ENCODE measurements at regions of chr7 and their contacts with region 1.

Region 1: DNA sequence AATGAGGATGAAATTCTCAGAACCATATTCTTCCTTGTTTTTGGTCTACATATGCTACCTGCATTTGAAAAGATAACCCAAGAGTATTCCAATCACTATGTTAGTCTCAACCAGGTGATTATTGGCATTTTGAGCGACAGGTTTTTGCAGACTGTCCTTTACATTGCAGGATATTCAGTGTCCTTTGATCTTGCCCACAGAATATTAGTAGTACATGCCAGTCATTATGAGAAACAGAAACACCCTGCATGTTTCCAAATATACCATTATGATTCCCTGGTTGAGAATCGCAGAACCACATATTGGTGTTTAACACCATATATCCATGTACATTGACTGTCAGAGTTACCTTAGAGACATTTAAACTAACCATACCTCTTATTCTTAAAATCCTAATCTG is 30.6 kb downstream of the TMEM243 start:
- DNase-seq: no peak
- H3K4me3 ChIP-seq: no peak overlapping the region
- H3K4me3 Mint-ChIP-seq: no peak overlapping the region
- H3K27ac ChIP-seq: no peak overlapping the region
- H3K27ac Mint-ChIP-seq: peak overlapping the region in 3 of 7 donors; percentile 11 to 62 (median 49)
- H3K4me1 ChIP-seq: peaks cover 10% of the 10 kb centered on the region
- H3K4me1 Mint-ChIP-seq: peaks cover 21 to 35% (median 29%) of the 10 kb centered on the region in 4 donors
- H3K27me3 ChIP-seq: no peaks in the 10 kb centered on the region
- H3K27me3 Mint-ChIP-seq: no peaks in the 10 kb centered on the region

Region 2: GRCh38 chr7:87173471-87173870 is 15.5 kb before region 1 on chr7:
- CTCF ChIA-PET with region 1: interaction called, 3 read pairs
- POLR2A ChIA-PET with region 1: interaction called, 7 read pairs
- intact Hi-C with region 1: loop called (anchors 2 kb)
- DNase-seq: no peak
- H3K4me3 ChIP-seq: no peak overlapping the region
- H3K4me3 Mint-ChIP-seq: no peak overlapping the region
- H3K27ac ChIP-seq: no peak overlapping the region
- H3K27ac Mint-ChIP-seq: peak overlapping the region in 5 of 7 donors; percentile 30 to 86 (median 49)
- H3K4me1 ChIP-seq: no peaks in the 10 kb centered on the region
- H3K4me1 Mint-ChIP-seq: peaks cover 20 to 34% (median 29%) of the 10 kb centered on the region in 4 donors
- H3K27me3 ChIP-seq: no peaks in the 10 kb centered on the region
- H3K27me3 Mint-ChIP-seq: no peaks in the 10 kb centered on the region

Region 3: GRCh38 chr7:87199700-87200450 is 10.9 kb after region 1 on chr7:
- CTCF ChIA-PET with region 1: interaction called, 4 read pairs
- POLR2A ChIA-PET with region 1: interaction called, 10 read pairs
- intact Hi-C with region 1: no loop called
- DNase-seq: no peak
- H3K4me3 ChIP-seq: no peak overlapping the region
- H3K4me3 Mint-ChIP-seq: peak overlapping the region in 4 of 8 donors; percentile 6 to 54 (median 32)
- H3K27ac ChIP-seq: no peak overlapping the region
- H3K27ac Mint-ChIP-seq: peak overlapping the region; percentile 17 to 85 (median 64)
- H3K4me1 ChIP-seq: peaks cover 53% of the 10 kb centered on the region
- H3K4me1 Mint-ChIP-seq: peaks cover 45 to 67% (median 59%) of the 10 kb centered on the region in 4 donors
- H3K27me3 ChIP-seq: no peaks in the 10 kb centered on the region
- H3K27me3 Mint-ChIP-seq: no peaks in the 10 kb centered on the region